ENCODE measurements at regions of chr6 and their contacts with region 1.

Region 1: GRCh38 chr6:37516076-37516919 is 16.6 kb upstream of the CCDC167 start:
- DNase-seq: peak; percentile 69 to 98
- ATAC-seq: peak; percentile 74 to 90 (median 84)
- H3K4me3 ChIP-seq: peak overlapping the region; percentile 2
- H3K4me3 Mint-ChIP-seq: peak overlapping the region; percentile 83
- H3K27ac ChIP-seq: peak overlapping the region; percentile 92
- H3K27ac Mint-ChIP-seq: peak overlapping the region; percentile 90 to 96
- H3K4me1 ChIP-seq: peaks cover 76% of the 10 kb centered on the region
- H3K4me1 Mint-ChIP-seq: peaks cover 53 to 68% of the 10 kb centered on the region in 2 donors
- H3K27me3 ChIP-seq: no peaks in the 10 kb centered on the region
- H3K27me3 Mint-ChIP-seq: peaks cover 0 to 6% of the 10 kb centered on the region in 2 donors
- CTCF ChIP-seq: no peak

Region 2: GRCh38 chr6:37432916-37433656 is 83.2 kb before region 1 on chr6 and contains the start of gene CMTR1:
- intact Hi-C with region 1: loop called (anchors 5 kb)
- DNase-seq: peak; percentile 96 to 98
- ATAC-seq: peak; percentile 85 to 94 (median 88)
- H3K4me3 ChIP-seq: peak within 1 kb of the TSS; percentile 55
- H3K4me3 Mint-ChIP-seq: peak within 1 kb of the TSS; percentile 76
- H3K27ac ChIP-seq: peak within 1 kb of the TSS; percentile 82
- H3K27ac Mint-ChIP-seq: peak within 1 kb of the TSS; percentile 80 to 85
- H3K4me1 ChIP-seq: peaks cover 18% of the 10 kb centered on the region
- H3K4me1 Mint-ChIP-seq: peaks cover 31 to 42% of the 10 kb centered on the region in 2 donors
- H3K27me3 ChIP-seq: no peaks in the 10 kb centered on the region
- H3K27me3 Mint-ChIP-seq: peaks cover 6 to 13% of the 10 kb centered on the region in 2 donors
- CTCF ChIP-seq: no peak
- total RNA-seq, gene CMTR1: 85.0 to 111 (median 94.7) TPM

Region 3: DNA sequence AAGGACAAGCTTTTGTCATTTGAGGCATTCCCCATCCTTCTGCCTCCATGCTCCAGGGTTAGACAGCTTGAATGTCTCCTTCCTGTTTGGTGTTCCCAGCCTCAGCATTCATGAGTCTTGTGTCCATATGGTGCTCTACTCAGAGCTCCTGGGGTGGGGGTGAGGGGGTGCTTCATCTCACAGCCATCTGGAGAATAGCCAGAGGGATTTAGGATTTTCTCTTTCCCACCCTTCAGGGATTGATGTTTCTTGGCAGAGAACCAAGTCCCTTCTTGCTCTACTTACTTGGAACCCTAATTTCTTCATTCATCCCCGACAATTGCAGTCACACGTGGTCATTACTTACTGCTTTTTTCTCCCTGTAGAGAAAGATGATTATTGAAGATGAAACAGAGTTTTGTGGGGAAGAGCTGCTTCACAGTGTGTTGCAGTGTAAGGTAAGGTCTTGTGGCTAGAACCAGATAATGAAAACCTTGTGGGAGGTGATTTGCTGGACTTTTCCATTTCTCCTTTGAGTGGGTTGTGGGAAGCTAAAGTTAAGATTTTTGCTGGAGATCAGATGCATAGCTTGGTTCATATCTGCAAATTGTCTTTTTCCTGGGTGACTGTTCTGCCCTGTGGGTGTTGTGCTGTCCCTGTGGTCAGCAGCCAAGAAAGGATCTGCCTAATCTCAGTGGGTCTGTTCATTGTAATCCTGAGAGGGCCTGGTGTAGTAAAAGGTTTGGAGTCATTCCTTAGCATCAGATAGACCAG is 64.7 kb before region 1 on chr6:
- intact Hi-C with region 1: no loop called
- DNase-seq: no peak
- ATAC-seq: no peak
- H3K4me3 ChIP-seq: no peak overlapping the region
- H3K4me3 Mint-ChIP-seq: no peak overlapping the region
- H3K27ac ChIP-seq: no peak overlapping the region
- H3K27ac Mint-ChIP-seq: peak overlapping the region in 1 of 2 donors; percentile 15
- H3K4me1 ChIP-seq: no peaks in the 10 kb centered on the region
- H3K4me1 Mint-ChIP-seq: peaks cover 13 to 19% of the 10 kb centered on the region in 2 donors
- H3K27me3 ChIP-seq: no peaks in the 10 kb centered on the region
- H3K27me3 Mint-ChIP-seq: no peaks in the 10 kb centered on the region
- CTCF ChIP-seq: no peak

Region 4: DNA sequence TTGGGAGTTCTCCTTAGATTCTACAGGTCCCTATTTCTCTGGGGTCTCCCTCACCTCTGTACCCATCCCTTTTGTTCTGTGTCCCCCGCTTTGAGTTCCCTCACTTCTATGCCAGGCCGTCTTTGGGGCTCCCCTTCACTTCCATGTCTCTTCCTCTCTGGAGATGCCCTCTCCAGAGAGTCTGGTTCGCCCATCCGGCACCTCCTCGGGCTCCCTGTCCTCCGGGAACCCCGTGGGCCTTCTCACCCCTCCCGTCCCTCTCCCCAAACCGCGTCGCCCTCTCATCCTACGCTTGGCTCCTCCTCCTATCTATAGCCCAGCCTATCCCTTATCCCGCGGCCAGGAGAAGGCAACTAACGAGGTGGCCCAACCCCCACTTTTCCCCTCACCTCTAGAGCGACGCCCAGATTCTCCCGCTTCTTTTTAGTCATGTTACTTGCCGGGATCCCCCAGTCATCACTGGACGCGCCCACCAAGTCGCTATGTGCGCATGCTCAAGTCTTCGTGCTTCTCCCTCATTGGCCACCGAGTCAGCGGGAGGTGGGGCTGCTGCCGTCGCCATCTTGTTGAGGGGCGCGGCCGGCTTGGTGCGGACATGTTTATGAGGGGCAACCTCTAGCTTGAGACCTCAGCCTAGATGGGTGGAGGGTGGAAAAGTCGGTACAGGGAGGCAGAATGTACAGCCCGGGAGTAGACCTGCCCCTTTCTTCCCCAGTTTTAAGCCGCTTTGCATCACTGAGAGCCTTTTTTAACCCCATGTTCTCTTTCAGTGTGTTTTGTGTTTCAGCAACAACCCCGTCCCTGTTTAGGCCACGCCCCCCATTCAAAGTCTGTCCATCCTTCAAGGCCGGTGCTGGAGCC is 16.6 kb before region 1 on chr6 and contains the start of gene CCDC167:
- intact Hi-C with region 1: loop called (anchors 1 kb)
- DNase-seq: peak; percentile 91 to 98
- ATAC-seq: peak; percentile 70 to 81 (median 71)
- H3K4me3 ChIP-seq: peak within 1 kb of the TSS; percentile 65
- H3K4me3 Mint-ChIP-seq: peak within 1 kb of the TSS; percentile 100
- H3K27ac ChIP-seq: peak within 1 kb of the TSS; percentile 58
- H3K27ac Mint-ChIP-seq: peak within 1 kb of the TSS; percentile 93 to 100
- H3K4me1 ChIP-seq: peaks cover 51% of the 10 kb centered on the region
- H3K4me1 Mint-ChIP-seq: peaks cover 49 to 53% of the 10 kb centered on the region in 2 donors
- H3K27me3 ChIP-seq: no peaks in the 10 kb centered on the region
- H3K27me3 Mint-ChIP-seq: no peaks in the 10 kb centered on the region
- CTCF ChIP-seq: no peak
- total RNA-seq, gene CCDC167: 10.2 to 27.4 (median 19.4) TPM

Region 5: GRCh38 chr6:37535759-37536490 is 19.6 kb after region 1 on chr6:
- intact Hi-C with region 1: loop called (anchors 2 kb)
- DNase-seq: peak in 1 of 2 donors; percentile 63
- ATAC-seq: peak; percentile 47 to 74 (median 73)
- H3K4me3 ChIP-seq: peak overlapping the region; percentile 40
- H3K4me3 Mint-ChIP-seq: peak overlapping the region; percentile 89
- H3K27ac ChIP-seq: no peak overlapping the region
- H3K27ac Mint-ChIP-seq: peak overlapping the region in 1 of 2 donors; percentile 45
- H3K4me1 ChIP-seq: peaks cover 25% of the 10 kb centered on the region
- H3K4me1 Mint-ChIP-seq: peaks cover 10 to 21% of the 10 kb centered on the region in 2 donors
- H3K27me3 ChIP-seq: peaks cover 29% of the 10 kb centered on the region
- H3K27me3 Mint-ChIP-seq: peaks cover 43 to 48% of the 10 kb centered on the region in 2 donors
- CTCF ChIP-seq: no peak

Region 6: DNA sequence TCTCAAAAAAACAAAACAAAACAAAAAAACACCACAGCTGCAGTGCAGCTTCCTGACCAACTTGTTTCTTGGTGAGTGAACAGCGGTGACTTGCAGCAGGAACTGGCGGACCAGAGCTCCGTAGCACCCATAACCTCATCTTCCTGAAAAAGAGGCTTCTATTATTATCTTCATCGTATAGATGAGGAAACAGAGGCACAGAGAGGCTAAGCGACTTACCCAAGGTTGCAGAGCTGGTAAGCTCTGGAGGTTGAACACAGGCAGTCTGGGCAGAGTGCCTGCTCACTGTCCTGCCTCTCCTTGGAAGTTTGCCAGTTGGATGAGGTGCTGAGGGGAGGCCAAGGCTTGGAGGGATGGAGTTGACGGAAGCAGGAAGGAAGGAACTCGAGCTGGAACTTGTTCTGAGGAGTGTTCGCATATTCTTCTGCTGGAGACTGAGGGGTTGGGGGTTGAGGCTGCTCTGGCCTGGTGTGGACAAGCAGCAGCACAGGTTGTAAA is 31.3 kb after region 1 on chr6:
- intact Hi-C with region 1: loop called (anchors 2 kb)
- DNase-seq: peak in 1 of 2 donors; percentile 63
- ATAC-seq: peak; percentile 57 to 90 (median 78)
- H3K4me3 ChIP-seq: no peak overlapping the region
- H3K4me3 Mint-ChIP-seq: peak overlapping the region; percentile 63
- H3K27ac ChIP-seq: peak overlapping the region; percentile 61
- H3K27ac Mint-ChIP-seq: peak overlapping the region; percentile 87 to 89
- H3K4me1 ChIP-seq: peaks cover 37% of the 10 kb centered on the region
- H3K4me1 Mint-ChIP-seq: peaks cover 23 to 26% of the 10 kb centered on the region in 2 donors
- H3K27me3 ChIP-seq: no peaks in the 10 kb centered on the region
- H3K27me3 Mint-ChIP-seq: no peaks in the 10 kb centered on the region
- CTCF ChIP-seq: no peak

Region 7: GRCh38 chr6:37741757-37742400 is 225.6 kb after region 1 on chr6:
- intact Hi-C with region 1: no loop called
- DNase-seq: no peak
- ATAC-seq: no peak
- H3K4me3 ChIP-seq: no peak overlapping the region
- H3K4me3 Mint-ChIP-seq: no peak overlapping the region
- H3K27ac ChIP-seq: no peak overlapping the region
- H3K27ac Mint-ChIP-seq: no peak overlapping the region
- H3K4me1 ChIP-seq: no peaks in the 10 kb centered on the region
- H3K4me1 Mint-ChIP-seq: no peaks in the 10 kb centered on the region
- H3K27me3 ChIP-seq: peaks cover 3% of the 10 kb centered on the region
- H3K27me3 Mint-ChIP-seq: peaks cover 25 to 44% of the 10 kb centered on the region in 2 donors
- CTCF ChIP-seq: no peak